HEK293 (cell line): ENCODE measurements at regions of chr22 and their contacts with region 1.

Region 1: DNA sequence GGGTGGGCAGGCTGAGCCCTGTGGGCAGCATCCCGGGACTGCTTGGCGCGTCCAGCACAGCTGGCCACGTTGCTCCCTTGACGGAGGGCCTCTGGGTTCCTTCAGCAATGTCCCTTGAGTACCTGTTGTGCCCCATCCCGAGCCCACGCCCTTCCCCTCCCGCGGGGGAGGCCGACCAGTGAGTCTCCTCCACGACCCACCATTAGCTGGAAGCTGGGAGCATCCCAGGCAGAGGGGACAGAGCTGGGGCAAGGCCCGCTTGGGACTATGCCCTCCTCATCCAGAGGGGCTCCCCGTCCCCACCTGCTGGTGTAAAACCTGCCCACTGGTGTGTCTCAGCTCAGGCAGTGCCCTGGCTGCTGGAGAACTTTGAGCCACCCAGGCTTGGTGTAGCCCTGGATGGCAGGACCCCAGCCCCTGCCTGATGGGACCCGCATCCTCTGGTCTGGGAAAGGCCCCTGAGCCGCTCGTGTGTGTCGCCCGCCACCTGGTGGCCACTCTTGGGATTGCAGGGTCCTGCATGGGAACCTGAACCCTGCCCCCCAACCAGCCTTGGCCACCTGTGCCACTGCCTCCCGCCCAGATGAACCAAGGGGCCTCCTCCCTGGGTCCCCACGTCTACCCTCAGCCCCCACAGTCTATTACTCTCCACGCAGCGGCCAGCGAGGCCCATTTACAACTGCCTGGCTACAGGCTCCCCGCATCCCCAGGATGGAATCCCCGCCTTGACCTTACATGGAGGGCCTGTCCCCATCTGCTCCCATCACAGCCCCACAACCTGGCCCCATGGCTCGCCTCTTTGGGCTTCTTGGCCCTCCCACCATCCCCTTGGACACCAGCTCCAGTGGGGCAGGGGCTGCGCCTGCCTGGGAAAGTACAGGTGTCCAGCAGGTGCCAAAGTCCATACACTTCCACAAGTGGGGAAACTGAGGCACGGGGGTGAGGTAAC is 16.6 kb upstream of the ARHGAP8 start:
- H3K4me3 ChIP-seq: no peak overlapping the region
- H3K27ac ChIP-seq: no peak overlapping the region
- H3K4me1 ChIP-seq: no peaks in the 10 kb centered on the region
- CTCF ChIP-seq: peak; percentile 97

Region 2: GRCh38 chr22:44616882-44617655 is 118.7 kb before region 1 on chr22:
- CTCF ChIA-PET with region 1: no interaction called
- POLR2A ChIA-PET with region 1: no interaction called
- H3K4me3 ChIP-seq: no peak overlapping the region
- H3K27ac ChIP-seq: no peak overlapping the region
- H3K4me1 ChIP-seq: no peaks in the 10 kb centered on the region
- CTCF ChIP-seq: no peak

Region 3: DNA sequence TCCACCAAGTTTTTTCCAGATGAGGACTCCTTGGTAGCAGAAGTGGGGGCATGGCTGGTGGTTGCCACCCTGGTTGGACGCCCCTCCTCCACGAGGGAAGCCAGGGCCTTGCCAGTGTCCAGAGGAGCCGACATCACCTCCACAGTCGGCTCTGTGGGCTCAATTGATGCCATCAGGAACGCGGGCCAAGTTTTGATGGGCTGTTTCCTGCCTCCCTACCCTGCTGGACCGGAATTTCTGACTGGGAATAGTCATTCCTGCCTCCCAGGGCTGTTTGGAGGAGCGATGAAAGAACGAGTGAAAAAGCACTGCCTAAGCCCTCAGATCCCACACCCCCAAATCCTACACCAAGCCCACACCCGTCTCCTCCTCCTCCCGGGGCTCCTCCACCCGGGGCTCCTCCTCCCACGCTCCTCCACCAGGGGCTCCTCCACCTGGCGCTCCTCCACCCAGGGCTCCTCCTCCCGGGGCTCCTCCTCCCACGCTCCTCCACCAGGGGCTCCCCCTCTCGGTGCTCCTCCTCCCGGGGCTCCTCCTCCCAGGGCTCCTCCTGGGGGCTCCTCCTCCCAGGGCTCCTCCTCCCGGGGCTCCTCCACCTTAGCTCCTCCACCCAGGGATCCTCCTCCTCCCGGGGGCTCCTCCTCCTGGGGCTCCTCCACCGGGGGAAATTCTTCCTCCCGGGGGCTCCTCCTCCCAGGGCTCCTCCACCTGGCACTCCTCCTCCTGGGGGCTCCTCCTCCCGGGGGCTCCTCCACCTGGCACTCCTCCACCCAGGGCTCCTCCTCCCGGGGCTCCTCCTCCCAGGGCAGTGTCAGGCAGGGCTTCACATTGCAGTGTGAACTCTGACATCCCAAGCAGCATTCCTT is 43.8 kb before region 1 on chr22:
- CTCF ChIA-PET with region 1: interaction called, 70 read pairs
- POLR2A ChIA-PET with region 1: interaction called, 3 read pairs
- H3K4me3 ChIP-seq: no peak overlapping the region
- H3K27ac ChIP-seq: no peak overlapping the region
- H3K4me1 ChIP-seq: no peaks in the 10 kb centered on the region
- CTCF ChIP-seq: no peak

Region 4: GRCh38 chr22:44707752-44708151 is 28.1 kb before region 1 on chr22:
- CTCF ChIA-PET with region 1: interaction called, 12 read pairs
- POLR2A ChIA-PET with region 1: interaction called, 4 read pairs
- H3K4me3 ChIP-seq: no peak overlapping the region
- H3K27ac ChIP-seq: no peak overlapping the region
- H3K4me1 ChIP-seq: peaks cover 2% of the 10 kb centered on the region
- CTCF ChIP-seq: no peak

Region 5: DNA sequence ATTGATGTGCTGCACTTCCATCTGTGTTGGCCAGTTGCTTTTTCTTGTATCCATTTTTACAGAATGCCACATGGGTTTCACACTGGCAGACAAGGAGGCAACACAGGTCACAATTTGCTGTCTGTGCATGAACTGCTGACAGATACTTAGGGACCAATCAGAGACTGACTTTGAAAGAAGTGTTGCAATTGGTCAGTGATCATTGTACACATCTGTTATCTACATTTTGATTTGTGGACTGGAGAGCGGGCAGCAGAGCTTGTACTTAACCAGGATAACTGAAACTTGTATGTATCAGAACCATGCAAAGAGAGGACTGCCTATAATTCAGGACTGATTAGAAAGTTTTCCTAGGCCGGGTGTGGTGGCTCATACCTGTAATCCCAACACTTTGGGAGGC is 12.0 kb before region 1 on chr22:
- CTCF ChIA-PET with region 1: interaction called, 12 read pairs
- POLR2A ChIA-PET with region 1: no interaction called
- H3K4me3 ChIP-seq: no peak overlapping the region
- H3K27ac ChIP-seq: no peak overlapping the region
- H3K4me1 ChIP-seq: 0 out of 2 replicates have a peak, but pooled peaks cover 2% of the 10 kb centered on the region
- CTCF ChIP-seq: no peak

Region 6: GRCh38 chr22:44831885-44832284 is 96.1 kb after region 1 on chr22:
- CTCF ChIA-PET with region 1: no interaction called
- POLR2A ChIA-PET with region 1: no interaction called
- H3K4me3 ChIP-seq: no peak overlapping the region
- H3K27ac ChIP-seq: no peak overlapping the region
- H3K4me1 ChIP-seq: no peaks in the 10 kb centered on the region
- CTCF ChIP-seq: no peak

Region 7: GRCh38 chr22:44855855-44856254 is 120.0 kb after region 1 on chr22:
- CTCF ChIA-PET with region 1: no interaction called
- POLR2A ChIA-PET with region 1: no interaction called
- H3K4me3 ChIP-seq: no peak overlapping the region
- H3K27ac ChIP-seq: no peak overlapping the region
- H3K4me1 ChIP-seq: no peaks in the 10 kb centered on the region
- CTCF ChIP-seq: no peak